Posterior vena cava (tissue), 2 donors: ENCODE measurements at regions of chr2 and their contacts with region 1.

Region 1: DNA sequence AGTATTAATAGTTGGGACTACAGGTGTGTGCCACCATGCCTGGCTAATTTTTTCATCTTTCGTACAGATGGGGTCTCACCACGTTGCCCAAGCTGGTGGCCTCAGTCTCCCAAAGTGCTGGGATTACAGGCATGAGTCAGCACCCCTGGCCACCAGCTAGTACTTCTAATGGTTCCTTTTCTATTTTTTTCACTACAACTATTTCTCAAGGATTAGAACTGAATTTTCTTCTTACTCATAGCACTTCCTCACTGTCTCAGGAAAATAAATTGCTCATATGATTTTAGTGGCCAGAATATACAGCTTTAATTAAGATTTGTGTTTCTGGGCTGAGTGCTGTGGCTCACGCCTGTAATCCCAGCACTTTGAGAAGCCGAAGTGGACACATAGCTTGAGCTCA is 43.2 kb upstream of the SOS1 start:
- DNase-seq: no peak

Region 2: GRCh38 chr2:39150874-39151497 is 13.1 kb before region 1 on chr2:
- intact Hi-C with region 1: no loop called
- DNase-seq: no peak

Region 3: GRCh38 chr2:39202639-39203369 is 38.7 kb after region 1 on chr2:
- intact Hi-C with region 1: loop called in 1 of 2 experiments (anchors 2 kb)
- DNase-seq: no peak

Region 4: DNA sequence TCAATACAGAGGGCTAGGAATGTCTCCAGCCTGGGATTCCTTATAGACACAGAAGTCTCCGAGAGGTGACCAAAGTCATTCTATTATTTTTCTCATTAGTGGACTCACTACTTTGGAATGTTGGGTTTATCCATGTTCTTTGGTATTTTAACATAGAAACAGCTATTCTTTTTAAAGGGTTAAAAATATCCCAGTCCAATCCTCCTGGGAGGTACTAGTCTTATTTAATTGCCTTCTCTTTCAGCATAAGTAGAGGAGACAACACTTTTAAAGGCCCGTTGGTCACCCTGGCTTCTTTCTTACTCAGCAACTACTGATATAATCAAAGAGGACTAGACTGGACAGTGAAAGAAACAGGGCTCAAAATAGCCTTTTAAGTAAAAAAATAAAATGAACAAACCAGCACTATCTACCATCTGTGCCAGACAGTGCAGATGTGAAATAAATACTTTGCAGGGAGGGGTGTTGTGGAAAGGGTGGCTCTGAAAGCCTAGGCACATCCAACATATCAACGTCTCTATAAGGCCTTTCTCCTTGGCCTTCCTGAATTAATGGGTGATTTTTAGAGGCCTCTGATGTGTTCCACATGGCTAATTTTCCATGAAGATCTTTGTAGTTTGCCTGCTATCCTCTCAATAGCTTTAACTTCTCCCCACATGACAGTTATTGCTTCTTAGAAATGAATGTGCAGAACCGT is 949.3 kb after region 1 on chr2:
- intact Hi-C with region 1: no loop called
- DNase-seq: no peak